Adrenal gland (tissue), 19 donors: ENCODE measurements at regions of chr1 and their contacts with region 1.

Region 1: DNA sequence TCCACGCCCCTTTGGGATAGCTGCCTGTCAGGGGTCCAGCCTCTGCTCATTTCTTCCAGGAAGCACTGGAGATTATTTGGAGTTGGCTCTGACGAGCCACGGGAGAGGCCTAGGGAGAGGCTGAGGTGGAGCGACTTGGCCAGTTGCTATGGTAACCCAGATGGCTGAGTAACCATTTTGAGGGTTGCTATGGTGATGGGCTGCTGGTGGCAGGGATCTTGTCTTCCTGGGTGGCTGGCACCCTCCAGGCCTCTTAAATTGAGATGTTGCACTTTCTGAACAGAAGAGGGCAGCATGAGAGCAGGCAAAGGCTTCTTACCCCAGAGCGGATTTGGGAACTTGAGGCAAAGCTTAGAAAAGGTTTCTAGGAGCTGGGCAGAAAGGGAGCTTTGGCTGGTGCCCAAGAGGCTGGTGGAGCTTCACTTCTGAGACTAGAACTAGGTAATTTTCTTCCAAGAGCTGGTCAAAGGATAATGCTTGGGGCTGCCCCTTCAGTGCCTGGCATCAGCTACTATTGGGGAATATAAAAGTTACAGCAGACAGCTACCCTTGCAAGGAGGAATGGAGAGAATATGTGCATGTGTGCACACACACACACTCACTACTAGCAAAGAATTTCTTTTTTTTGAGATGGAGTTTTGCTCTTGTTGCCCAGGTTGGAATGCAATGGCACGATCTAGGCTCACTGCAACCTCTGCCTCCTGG is 72.5 kb downstream of the NDUFS5 start:
- DNase-seq: peak; percentile 64 to 90 (median 81)
- H3K4me3 ChIP-seq: no peak overlapping the region
- H3K27ac ChIP-seq: peak overlapping the region in 1 of 5 donors; percentile 3
- H3K4me1 ChIP-seq: peaks cover 8 to 24% of the 10 kb centered on the region in 2 donors
- H3K27me3 ChIP-seq: no peaks in the 10 kb centered on the region
- CTCF ChIP-seq: peak; percentile 56 to 86 (median 76)
- POLR2A ChIP-seq: no peak

Region 2: DNA sequence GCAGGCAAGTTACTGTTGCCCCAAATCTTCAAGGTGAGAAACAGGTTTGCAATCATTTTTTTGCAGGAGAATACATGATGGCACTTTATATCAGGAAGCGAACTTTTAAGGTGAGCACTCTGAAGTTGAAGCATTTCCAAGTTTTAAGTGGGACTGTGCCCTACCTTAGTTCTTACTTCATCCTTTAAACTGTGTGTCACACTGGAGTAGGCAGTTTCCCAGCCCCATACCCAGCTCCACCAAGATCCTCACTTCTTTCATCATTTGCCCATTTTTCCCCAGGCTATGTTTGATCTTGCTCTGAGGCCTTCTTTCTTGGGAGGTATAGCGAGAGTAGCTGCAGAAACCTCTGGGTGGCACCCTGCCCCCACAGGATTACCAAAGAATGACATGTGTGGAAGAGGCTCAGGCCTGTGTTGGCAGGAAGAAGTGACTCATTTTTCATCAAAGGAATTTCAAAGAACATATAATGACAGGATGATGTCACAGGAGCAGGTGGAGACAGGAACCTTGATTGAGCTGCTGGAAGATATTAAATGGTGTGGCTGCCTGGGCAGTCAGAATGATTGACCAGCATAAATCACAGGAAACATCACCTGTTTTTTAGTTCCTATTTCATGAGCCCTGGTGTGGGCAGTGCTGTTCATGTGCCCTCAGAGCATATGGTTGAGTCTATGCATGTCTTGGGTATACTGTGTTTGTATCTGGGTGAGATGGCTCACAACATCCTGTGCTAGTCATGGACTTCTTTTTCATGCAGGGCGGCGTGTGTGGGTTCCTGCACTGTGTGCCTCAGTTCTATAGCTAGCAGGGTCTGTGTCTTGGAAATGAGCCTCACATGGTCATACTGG is 85.0 kb after region 1 on chr1:
- intact Hi-C with region 1: loop called in 1 of 2 experiments (anchors 10 kb)
- DNase-seq: peak; percentile 72 to 89 (median 83)
- H3K4me3 ChIP-seq: no peak overlapping the region
- H3K27ac ChIP-seq: peak overlapping the region in 4 of 5 donors; percentile 11 to 76 (median 54)
- H3K4me1 ChIP-seq: peaks cover 8 to 34% of the 10 kb centered on the region in 2 donors
- H3K27me3 ChIP-seq: no peaks in the 10 kb centered on the region
- CTCF ChIP-seq: peak; percentile 30 to 55 (median 51)
- POLR2A ChIP-seq: no peak

Region 3: DNA sequence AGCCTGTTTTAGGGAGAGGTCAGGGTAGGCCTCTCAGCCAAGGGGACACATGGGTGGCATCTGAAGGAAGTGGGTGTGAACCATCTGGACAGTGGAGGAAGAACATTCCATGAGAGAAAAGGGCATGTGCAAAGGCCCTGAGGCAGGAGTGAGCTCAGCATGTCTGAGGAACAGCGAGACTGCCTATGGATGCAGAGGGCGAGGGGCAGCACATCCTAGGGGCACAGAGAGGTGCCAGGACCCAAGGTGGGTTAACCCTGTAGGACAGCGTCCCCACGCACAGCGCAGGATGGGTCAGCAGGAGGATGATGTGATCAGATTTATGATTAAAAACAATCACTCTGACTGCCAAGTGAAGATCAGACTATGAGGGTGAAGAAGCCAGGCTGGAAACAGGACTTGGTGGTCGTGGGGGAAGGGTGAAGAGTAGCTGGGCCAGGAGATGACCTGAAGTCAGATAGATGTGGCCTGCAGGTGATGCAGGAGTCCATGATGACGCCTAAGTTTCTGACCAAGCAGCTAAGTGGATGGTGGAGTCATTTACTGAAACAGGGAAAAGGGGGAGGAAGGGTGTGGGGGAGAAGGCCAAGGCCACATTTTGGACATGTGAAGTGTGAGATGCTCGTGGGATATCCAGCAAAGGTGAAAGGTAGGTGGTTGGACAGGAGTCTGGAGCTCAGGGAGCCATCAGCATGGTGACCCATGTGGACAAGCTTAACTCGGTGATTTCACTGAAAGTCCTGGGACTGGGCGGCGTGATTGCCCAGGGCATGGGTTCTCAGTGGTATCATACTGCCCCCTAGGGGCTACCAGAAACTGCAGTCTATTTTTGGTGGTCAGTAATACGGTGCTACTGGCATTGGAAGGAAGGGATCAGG is 440.1 kb after region 1 on chr1:
- intact Hi-C with region 1: loop called in 1 of 2 experiments (anchors 5 kb)
- DNase-seq: peak; percentile 76 to 89 (median 81)
- H3K4me3 ChIP-seq: no peak overlapping the region
- H3K27ac ChIP-seq: no peak overlapping the region
- H3K4me1 ChIP-seq: peaks cover 0 to 8% of the 10 kb centered on the region in 2 donors
- H3K27me3 ChIP-seq: no peaks in the 10 kb centered on the region
- CTCF ChIP-seq: peak; percentile 88 to 94 (median 91)
- POLR2A ChIP-seq: no peak